ENCODE measurements at regions of chr7 and their contacts with region 1.

Region 1: GRCh38 chr7:4883374-4884144 is at the start of gene RADIL:
- DNase-seq: peak; percentile 69 to 95
- H3K4me3 ChIP-seq: peak within 1 kb of the TSS; percentile 66 to 80
- H3K27ac ChIP-seq: peak within 1 kb of the TSS; percentile 72 to 82
- H3K4me1 ChIP-seq: peaks cover 2 to 4% of the 10 kb centered on the region in 2 donors
- H3K27me3 ChIP-seq: no peaks in the 10 kb centered on the region
- CTCF ChIP-seq: peak; percentile 68 to 89 (median 86)
- total RNA-seq, gene RADIL: 42.4 TPM

Region 2: DNA sequence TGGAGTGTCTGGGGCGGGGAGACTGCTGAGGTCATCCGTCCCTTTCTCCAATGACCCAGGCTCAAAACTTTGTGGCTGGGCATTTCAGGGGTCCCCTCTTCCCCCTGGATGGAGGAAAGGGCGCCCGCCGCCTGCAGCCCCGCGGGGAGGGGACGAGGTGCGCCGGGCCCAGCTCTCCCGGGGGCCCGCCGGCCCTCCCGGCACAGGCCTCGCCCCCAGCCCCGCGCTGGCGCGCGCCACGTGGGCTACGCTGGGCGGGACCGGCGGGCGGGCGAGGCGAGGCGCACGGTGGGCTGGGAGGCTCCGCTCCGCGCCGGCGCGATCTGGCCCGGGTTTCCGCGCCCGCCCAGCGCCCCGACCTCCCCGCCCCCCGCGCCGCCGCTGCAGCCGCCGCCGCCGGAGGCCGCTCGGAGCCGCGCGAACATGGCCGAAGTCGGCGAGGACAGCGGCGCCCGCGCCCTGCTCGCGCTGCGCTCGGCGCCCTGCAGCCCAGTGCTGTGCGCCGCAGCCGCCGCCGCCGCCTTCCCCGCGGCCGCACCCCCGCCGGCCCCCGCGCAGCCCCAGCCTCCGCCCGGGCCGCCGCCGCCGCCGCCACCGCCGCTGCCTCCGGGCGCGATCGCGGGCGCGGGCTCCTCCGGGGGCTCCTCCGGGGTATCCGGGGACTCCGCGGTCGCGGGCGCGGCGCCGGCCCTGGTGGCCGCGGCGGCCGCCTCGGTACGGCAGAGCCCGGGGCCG is 201.5 kb before region 1 on chr7 and contains the start of gene FOXK1:
- intact Hi-C with region 1: loop called (anchors 10 kb)
- DNase-seq: peak in 1 of 2 donors; percentile 82
- H3K4me3 ChIP-seq: peak within 1 kb of the TSS; percentile 92 to 97
- H3K27ac ChIP-seq: peak within 1 kb of the TSS; percentile 85 to 94
- H3K4me1 ChIP-seq: peaks cover 0 to 11% of the 10 kb centered on the region in 2 donors
- H3K27me3 ChIP-seq: no peaks in the 10 kb centered on the region
- CTCF ChIP-seq: peak in 1 of 3 experiments; percentile 9
- total RNA-seq, gene FOXK1: 31.7 TPM

Region 3: DNA sequence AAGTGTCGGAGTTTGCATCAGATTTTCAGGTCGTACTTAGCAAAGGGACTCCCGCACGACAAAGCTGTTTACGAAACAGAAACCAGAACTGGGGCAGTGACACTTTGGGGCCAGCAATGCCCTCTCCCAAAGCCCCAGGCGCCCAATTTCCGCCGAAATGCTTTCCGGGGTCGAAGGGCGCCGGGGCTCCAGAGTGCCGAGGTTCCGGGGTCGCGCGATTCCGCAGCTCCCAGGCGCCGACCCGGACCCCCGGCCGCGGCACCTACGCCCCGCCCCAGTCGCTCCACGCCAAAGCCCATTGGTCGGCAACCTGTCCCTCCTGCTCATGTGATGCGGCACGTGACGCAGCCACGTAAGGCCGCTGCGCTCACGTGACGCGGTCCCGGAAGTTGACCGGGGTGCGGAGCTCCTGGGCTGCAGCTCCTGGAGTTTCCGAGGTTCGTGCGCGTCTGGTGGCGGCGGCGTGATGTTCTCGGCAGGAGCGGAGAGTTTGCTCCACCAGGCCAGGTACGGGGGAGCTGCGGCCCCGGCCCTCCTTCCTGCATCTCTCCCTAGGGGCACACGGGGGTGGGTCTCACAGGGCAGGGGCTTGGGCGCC is 108.2 kb before region 1 on chr7 and contains the start of gene AP5Z1:
- intact Hi-C with region 1: loop called (anchors 5 kb)
- DNase-seq: peak; percentile 83 to 97
- H3K4me3 ChIP-seq: peak within 1 kb of the TSS; percentile 98 to 100
- H3K27ac ChIP-seq: peak within 1 kb of the TSS; percentile 90 to 95
- H3K4me1 ChIP-seq: peaks cover 8 to 12% of the 10 kb centered on the region in 2 donors
- H3K27me3 ChIP-seq: no peaks in the 10 kb centered on the region
- CTCF ChIP-seq: no peak
- total RNA-seq, gene AP5Z1: 115 TPM

Region 4: DNA sequence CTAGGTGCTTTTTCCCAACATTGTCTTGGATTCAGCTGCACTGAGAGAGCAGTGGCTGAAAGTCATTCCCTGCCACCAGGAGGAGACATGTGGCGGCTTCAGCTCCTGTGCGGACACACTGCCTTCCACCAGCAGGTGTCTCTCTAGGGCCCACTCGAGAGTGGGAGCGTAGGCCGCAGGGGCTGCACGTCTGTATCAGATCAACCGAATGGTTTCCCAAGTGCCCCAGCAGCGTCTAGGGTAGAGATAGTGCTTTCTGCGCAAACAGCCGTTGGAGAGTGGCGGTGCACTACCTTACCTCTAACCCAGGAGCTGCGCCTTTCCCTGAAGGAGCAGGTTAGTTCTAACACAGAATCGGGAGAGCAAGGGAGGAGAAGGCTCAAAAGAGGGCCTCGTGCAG is 53.4 kb before region 1 on chr7:
- intact Hi-C with region 1: loop called (anchors 5 kb)
- DNase-seq: no peak
- H3K4me3 ChIP-seq: no peak overlapping the region
- H3K27ac ChIP-seq: no peak overlapping the region
- H3K4me1 ChIP-seq: no peaks in the 10 kb centered on the region
- H3K27me3 ChIP-seq: no peaks in the 10 kb centered on the region
- CTCF ChIP-seq: peak; percentile 44 to 47 (median 46)

Region 5: DNA sequence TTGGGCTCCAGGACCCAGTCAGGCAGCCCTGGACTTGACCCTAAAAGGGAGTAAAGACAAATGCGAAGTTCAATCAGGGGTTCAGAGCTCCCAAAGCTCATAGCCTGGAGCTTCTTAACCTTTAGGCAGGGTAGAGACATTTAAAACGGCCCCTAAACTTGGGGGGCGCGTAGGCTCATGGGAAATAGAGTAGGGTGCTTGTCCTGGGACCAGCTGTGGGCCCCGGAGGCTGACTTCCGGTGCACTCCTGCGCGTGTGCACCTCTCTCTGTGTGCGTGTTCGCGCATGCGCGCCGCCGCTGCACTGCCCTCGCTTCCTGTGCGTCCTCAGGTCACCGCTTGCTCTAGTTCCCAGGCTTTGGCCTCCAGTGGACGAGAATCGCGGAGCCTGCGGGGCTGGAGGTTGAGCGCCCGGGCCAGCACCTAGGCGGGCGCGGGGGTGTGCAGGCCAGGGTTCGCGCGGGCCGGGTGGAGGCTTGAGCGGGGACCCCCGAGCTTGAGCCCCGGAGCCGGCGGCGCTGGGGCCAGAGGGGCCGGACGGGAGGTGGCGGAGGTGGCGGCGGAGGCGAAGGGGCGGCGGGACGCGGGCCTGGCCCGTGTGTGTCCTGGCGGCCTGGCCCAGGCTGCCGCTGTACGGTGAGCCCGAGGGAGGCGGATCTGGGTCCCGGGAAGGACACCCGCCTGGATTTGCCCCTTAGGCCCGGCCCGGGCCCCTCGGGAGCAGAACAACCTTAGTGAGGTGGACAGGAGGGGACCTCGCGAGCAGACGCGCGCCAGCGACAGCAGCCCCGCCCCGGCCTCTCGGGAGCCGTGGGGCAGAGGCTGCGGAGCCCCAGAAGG is 162.2 kb after region 1 on chr7 and contains the start of gene RBAK:
- intact Hi-C with region 1: loop called (anchors 2 kb)
- DNase-seq: peak; percentile 78 to 96
- H3K4me3 ChIP-seq: peak within 1 kb of the TSS; percentile 94
- H3K27ac ChIP-seq: peak within 1 kb of the TSS; percentile 64 to 80
- H3K4me1 ChIP-seq: peaks cover 0 to 5% of the 10 kb centered on the region in 2 donors
- H3K27me3 ChIP-seq: no peaks in the 10 kb centered on the region
- CTCF ChIP-seq: no peak
- total RNA-seq, gene RBAK: 9.9 TPM